GM13977 (cell line): ENCODE measurements at regions of chr2 and their contacts with region 1.

Region 1: GRCh38 chr2:110804915-110805314 is 72.5 kb downstream of the ACOXL start:
- DNase-seq: peak; percentile 72
- CTCF ChIP-seq: no peak

Region 2: DNA sequence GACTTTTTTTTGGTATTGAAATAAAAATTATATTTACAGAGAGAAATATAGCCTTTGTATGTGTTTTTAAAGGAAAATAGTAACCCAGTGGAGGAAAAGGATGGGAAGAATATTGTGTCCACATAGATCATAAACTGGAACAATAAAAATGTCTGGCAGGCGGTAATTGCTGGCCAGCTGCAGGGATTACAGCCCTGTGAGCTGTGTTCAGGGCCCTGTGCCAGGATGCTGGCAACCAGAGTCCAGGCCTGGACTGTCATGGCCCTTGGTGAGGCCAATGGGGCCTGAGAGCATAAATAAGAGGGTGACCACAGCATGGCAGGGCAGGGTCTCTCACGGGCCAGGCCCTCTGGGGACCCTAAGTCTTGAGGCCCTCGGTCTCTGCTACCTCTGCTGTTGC is 98.6 kb after region 1 on chr2:
- in situ Hi-C with region 1: no loop called
- DNase-seq: no peak
- CTCF ChIP-seq: no peak

Region 3: GRCh38 chr2:111705711-111706336 is 900.9 kb after region 1 on chr2:
- in situ Hi-C with region 1: loop called (anchors 25 kb)
- DNase-seq: peak; percentile 72
- CTCF ChIP-seq: no peak